Mammary epithelial cell (primary cell): ENCODE measurements at regions of chr17 and their contacts with region 1.

Region 1: GRCh38 chr17:34076743-34077631 is 178.1 kb upstream of the CCL2 start:
- DNase-seq: no peak
- H3K4me3 ChIP-seq: no peak overlapping the region
- H3K27ac ChIP-seq: no peak overlapping the region
- H3K4me1 ChIP-seq: no peaks in the 10 kb centered on the region
- H3K27me3 ChIP-seq: no peaks in the 10 kb centered on the region
- CTCF ChIP-seq: no peak

Region 2: DNA sequence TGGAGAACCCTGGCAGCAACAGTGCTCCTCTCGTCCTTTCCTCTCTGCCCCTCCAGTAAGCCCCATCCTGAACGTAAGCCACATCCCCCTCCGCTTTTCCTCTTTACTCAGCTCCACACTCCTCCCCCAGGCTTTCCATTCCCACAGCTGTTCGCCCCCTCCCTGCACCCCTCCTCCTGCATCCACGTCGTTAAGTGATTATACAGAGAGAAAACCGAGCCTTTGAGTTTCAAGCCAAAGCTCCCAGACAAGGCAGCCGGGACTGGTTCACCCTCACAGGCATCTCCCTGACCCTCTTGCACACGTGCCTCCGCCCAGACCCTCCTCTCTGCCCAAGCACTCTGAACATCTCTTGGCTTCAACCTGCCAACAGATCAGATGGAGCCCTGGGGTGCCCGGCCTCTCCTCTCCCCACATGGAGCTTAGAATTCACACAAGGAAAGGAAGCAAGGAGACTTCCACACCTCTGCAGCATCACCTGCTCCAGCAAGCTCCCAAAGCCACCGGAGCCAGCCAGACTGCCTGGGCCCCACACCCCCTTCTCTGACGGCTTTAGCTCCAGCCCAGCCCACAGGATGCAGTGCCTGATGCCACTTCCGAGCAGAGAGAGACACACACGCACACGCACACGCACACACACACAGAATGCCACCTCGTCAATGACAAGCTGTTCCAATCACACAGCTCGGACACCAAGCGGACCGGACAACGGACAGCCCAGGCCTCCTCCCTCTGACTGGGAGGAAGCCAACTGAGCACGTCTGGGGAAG is 78.2 kb after region 1 on chr17:
- CTCF ChIA-PET with region 1: no interaction called
- dilution Hi-C with region 1: loop called (anchors 5 kb)
- in situ Hi-C with region 1: no loop called
- intact Hi-C with region 1: no loop called
- DNase-seq: no peak
- H3K4me3 ChIP-seq: no peak overlapping the region
- H3K27ac ChIP-seq: no peak overlapping the region
- H3K4me1 ChIP-seq: no peaks in the 10 kb centered on the region
- H3K27me3 ChIP-seq: no peaks in the 10 kb centered on the region
- CTCF ChIP-seq: no peak